Activated B cell treated with CpG ODN at 0.5 μM for 24 hours (primary cell): ENCODE measurements at regions of chr16 and their contacts with region 1.

Region 1: GRCh38 chr16:65671-66137 is 6.7 kb downstream of the RHBDF1 start:
- DNase-seq: peak; percentile 81
- ATAC-seq: peak; percentile 97
- H3K4me3 Mint-ChIP-seq: no peak overlapping the region
- H3K27ac Mint-ChIP-seq: no peak overlapping the region
- H3K4me1 Mint-ChIP-seq: peaks cover 4% of the 10 kb centered on the region
- H3K27me3 Mint-ChIP-seq: peaks cover 6% of the 10 kb centered on the region
- CTCF ChIP-seq: peak; percentile 50

Region 2: GRCh38 chr16:53346-54236 is 12.1 kb before region 1 on chr16 and contains the starts of genes POLR3K and SNRNP25:
- CTCF ChIA-PET with region 1: interaction called, 10 read pairs
- POLR2A ChIA-PET with region 1: interaction called, 3 read pairs
- intact Hi-C with region 1: loop called (anchors 1 kb)
- DNase-seq: peak; percentile 88
- ATAC-seq: peak; percentile 96
- H3K4me3 Mint-ChIP-seq: peak within 1 kb of the TSS; percentile 95
- H3K27ac Mint-ChIP-seq: peak within 1 kb of the TSS; percentile 88
- H3K4me1 Mint-ChIP-seq: peaks cover 27% of the 10 kb centered on the region
- H3K27me3 Mint-ChIP-seq: no peaks in the 10 kb centered on the region
- CTCF ChIP-seq: no peak
- total RNA-seq, gene POLR3K: 26.5 and 30.6 TPM in 2 replicates
- total RNA-seq, gene SNRNP25: 34.9 and 36.6 TPM in 2 replicates

Region 3: GRCh38 chr16:84718-85406 is 19.2 kb after region 1 on chr16:
- CTCF ChIA-PET with region 1: interaction called, 218 read pairs
- POLR2A ChIA-PET with region 1: interaction called, 4 read pairs
- intact Hi-C with region 1: loop called (anchors 1 kb)
- DNase-seq: peak; percentile 63
- ATAC-seq: peak; percentile 84
- H3K4me3 Mint-ChIP-seq: peak overlapping the region; percentile 58
- H3K27ac Mint-ChIP-seq: peak overlapping the region; percentile 91
- H3K4me1 Mint-ChIP-seq: peaks cover 36% of the 10 kb centered on the region
- H3K27me3 Mint-ChIP-seq: no peaks in the 10 kb centered on the region
- CTCF ChIP-seq: no peak

Region 4: DNA sequence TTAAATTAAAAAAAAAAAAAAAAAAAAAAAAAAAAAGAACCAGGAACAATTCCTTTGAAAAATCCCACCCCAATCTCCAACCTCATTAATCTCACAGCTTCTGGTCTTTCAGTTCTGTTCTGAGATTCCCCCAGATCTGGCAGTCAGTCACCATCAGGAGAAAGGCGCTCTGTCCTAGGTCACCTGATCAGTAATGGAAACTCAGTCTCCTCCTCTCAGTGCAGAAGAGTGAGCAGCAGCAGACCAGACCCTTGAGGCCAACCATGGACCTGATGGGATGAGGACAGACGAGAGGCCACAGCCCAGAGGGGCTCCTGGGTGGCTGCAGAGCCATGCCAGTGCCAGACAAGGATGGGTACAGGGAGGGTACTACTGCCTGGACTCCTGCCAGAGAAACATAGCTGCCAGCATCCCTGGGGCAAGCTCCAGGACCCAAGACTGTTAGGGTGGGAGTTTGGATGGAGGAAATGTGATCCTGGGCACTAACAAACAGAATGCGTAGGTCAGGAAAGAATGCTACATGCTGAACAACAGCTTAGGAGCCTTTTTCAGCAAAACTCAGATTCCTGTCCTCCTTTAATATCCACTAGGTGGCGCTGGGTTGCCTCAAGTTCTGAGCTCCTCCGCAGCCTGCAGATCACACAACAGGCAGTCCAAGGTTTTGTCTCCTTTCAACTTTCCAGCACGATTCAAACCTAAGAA is 41.1 kb after region 1 on chr16:
- CTCF ChIA-PET with region 1: interaction called, 21 read pairs
- POLR2A ChIA-PET with region 1: no interaction called
- intact Hi-C with region 1: loop called (anchors 2 kb)
- DNase-seq: no peak
- ATAC-seq: peak; percentile 81
- H3K4me3 Mint-ChIP-seq: no peak overlapping the region
- H3K27ac Mint-ChIP-seq: no peak overlapping the region
- H3K4me1 Mint-ChIP-seq: no peaks in the 10 kb centered on the region
- H3K27me3 Mint-ChIP-seq: no peaks in the 10 kb centered on the region
- CTCF ChIP-seq: no peak

Region 5: DNA sequence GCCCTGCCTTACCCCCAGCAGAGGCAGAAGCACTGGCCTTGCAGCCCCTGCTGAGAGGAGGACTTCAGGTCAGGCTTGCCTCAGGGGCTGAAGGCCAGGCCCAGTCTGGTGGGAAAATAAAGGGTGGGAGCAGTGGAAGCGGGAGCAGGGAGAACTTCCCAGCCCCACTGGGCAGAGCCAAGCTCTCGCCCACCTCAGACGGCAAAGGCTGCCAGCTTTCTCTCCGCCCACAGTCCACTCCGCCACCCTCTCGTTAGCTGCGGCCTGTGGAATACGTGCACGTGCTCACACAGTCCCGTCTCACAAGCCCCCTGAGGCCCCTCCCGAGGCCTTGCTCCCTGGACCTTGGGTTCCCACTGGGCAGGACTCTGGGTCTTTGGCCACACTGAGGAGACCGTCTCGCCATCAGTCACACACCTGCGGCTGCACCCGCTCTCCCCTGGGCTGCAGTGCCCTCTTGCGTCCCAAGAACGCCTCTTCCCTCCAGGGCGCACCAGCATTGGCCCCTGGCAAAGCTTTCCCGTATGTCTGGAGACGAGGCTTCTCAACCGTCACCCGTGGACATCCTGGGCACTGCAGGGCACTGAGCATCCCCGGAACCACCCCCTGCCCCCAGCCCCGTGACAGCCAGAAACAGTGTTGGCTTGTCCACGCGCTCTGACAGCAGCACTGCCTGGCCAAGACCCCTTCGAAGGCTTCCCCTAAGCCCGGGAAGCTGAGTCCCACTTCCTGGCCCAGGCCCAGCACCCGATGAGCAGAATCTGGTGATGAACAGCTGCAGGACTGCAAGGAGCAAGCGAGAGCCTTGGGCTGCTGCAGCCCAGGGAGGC is 296.4 kb after region 1 on chr16:
- CTCF ChIA-PET with region 1: interaction called, 9 read pairs
- POLR2A ChIA-PET with region 1: no interaction called
- intact Hi-C with region 1: loop called (anchors 1 kb)
- DNase-seq: peak; percentile 57
- ATAC-seq: peak; percentile 92
- H3K4me3 Mint-ChIP-seq: no peak overlapping the region
- H3K27ac Mint-ChIP-seq: no peak overlapping the region
- H3K4me1 Mint-ChIP-seq: peaks cover 3% of the 10 kb centered on the region
- H3K27me3 Mint-ChIP-seq: peaks cover 5% of the 10 kb centered on the region
- CTCF ChIP-seq: peak; percentile 45